CD8-positive, alpha-beta T cell (primary cell): ENCODE measurements at regions of chr9 and their contacts with region 1.

Region 1: DNA sequence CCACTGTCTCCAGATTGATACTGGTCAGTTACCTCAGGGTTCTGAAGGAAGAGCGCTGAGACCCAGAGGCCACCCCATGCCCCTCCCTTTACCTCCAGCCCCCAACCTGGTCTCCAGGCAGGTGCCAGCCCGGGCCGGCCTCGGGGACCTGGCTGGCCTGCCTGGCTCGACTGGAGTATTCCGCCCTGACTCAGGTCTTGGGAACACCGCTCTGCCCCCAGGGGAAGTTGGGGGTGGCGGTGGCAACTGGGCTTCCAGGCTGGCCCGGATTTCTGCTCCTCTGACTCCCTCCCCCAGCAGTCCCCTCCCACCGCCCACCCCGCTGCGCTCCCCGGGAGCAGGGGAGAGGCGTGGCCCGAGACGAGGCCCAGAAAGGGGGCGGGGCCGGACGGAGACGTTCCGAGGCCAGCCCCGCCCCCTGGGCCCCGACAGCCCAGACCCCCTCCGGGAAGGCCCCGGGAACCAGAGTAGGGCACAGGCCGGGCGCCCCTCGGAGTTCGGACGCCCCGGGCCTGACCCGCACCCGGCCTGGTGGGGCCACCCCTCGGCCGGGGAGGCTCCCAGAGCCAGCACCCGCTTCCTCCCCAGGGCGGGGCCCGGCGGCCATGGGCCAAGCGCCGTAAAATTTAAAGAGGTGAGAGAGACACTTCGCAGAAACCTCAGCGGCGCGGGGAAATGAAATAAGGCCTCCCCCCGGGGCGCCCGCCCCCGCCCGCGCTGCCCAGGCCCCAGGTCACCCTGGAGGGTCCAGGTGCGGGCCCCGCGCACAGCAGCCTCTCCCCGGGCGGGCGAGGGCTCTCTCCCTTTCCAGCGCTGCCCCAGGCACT is 82.4 kb upstream of the ZBTB43 start:
- DNase-seq: peak; percentile 66 to 94 (median 90)
- ATAC-seq: peak; percentile 66
- H3K4me3 ChIP-seq: peak overlapping the region; percentile 65 to 92
- H3K4me3 Mint-ChIP-seq: peak overlapping the region; percentile 90
- H3K27ac ChIP-seq: peak overlapping the region; percentile 87 to 99
- H3K27ac Mint-ChIP-seq: peak overlapping the region; percentile 95
- H3K4me1 ChIP-seq: peaks cover 44% of the 10 kb centered on the region
- H3K4me1 Mint-ChIP-seq: peaks cover 53% of the 10 kb centered on the region
- H3K27me3 ChIP-seq: no peaks in the 10 kb centered on the region
- H3K27me3 Mint-ChIP-seq: no peaks in the 10 kb centered on the region
- CTCF ChIP-seq: no peak

Region 2: DNA sequence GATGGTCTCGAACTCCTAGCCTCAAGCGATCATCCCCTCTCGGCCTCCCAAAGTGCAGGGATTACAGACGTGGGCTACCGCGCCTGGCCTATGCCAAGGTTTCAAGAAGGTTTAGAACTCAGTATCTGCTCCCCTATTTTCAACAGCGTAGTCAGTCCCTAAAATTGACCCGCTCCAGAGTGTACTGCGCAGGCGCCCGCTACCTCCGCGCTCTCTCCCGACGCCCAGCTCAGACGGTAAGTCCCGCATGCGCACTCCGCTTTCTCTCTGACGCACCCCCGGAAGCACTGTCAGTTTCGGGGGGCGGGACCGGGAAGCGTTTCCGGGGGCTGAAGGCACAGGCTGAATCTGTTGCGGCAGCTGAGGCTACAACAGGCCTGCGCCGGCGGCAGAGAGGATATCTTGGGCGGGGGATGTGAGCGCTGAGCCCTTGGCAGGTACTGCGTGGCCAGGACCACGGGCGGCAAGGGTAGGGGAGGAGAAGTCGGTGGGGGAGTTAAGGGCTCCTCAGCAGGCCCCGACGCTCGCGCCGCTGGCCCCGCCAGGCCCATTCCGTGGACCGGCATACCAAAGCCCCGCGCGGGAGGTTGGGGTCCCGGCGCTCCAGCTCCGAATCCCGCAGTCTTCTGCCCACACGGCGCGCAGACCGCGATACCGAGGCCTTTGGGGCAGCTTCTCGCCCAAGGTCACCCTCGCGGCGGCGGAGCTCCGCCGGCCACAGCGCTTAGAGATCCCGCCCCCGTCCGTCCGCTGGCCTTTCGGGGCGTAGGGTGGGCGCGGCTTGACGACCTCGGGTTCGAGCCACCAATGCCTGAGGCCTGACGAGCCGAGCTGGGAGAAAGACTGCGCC is 82.5 kb after region 1 on chr9 and contains the start of gene ZBTB43:
- CTCF ChIA-PET with region 1: no interaction called
- POLR2A ChIA-PET with region 1: interaction called, 7 read pairs
- intact Hi-C with region 1: loop called in 1 of 2 experiments (anchors 1 kb)
- DNase-seq: peak; percentile 97 to 99 (median 99)
- ATAC-seq: peak; percentile 82
- H3K4me3 ChIP-seq: peak within 1 kb of the TSS; percentile 83 to 85
- H3K4me3 Mint-ChIP-seq: peak within 1 kb of the TSS; percentile 98
- H3K27ac ChIP-seq: peak within 1 kb of the TSS; percentile 87 to 93
- H3K27ac Mint-ChIP-seq: peak within 1 kb of the TSS; percentile 99
- H3K4me1 ChIP-seq: peaks cover 32% of the 10 kb centered on the region
- H3K4me1 Mint-ChIP-seq: peaks cover 43% of the 10 kb centered on the region
- H3K27me3 ChIP-seq: no peaks in the 10 kb centered on the region
- H3K27me3 Mint-ChIP-seq: no peaks in the 10 kb centered on the region
- CTCF ChIP-seq: no peak
- total RNA-seq, gene ZBTB43: 55.7 to 65.0 TPM

Region 3: DNA sequence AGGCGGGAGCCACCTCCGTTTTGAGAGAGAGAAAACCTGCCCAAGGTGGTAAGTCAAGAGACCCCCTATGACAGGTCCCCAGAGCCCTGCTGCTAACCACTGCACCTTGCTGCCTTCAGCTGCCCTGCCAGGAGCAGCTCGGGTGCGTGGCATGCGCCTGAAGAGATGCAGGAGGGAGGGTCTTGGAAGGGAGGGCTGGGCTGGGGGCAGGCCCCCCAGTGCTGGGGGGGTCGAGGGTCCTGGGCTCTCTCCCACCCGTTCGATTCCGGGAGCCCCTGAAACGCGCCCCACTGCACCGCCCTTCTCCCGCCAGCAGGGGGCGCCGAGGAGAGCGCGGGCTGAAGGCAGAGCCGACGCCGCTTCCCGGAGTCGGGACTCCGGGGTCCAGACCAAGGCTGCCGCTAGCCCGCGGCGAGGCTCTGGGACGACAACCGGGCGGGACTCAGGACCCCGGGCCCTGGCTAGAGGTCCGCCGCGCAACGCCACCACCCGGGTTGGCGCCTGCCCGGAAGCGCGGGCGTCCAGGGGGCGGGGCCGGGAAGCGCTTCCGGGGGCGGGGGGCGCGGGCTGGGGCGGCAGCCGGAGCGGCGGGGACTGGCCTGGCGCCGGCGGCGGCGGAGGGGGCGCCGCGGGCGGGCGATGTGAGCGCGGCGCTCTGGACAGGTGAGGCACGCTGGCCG is 137.8 kb after region 1 on chr9 and contains the start of gene ZBTB34:
- CTCF ChIA-PET with region 1: no interaction called
- POLR2A ChIA-PET with region 1: no interaction called
- intact Hi-C with region 1: loop called in 1 of 2 experiments (anchors 5 kb)
- DNase-seq: peak; percentile 59 to 90 (median 76)
- ATAC-seq: peak; percentile 84
- H3K4me3 ChIP-seq: peak within 1 kb of the TSS; percentile 71 to 74
- H3K4me3 Mint-ChIP-seq: peak within 1 kb of the TSS; percentile 86
- H3K27ac ChIP-seq: peak within 1 kb of the TSS; percentile 57 to 76
- H3K27ac Mint-ChIP-seq: peak within 1 kb of the TSS; percentile 91
- H3K4me1 ChIP-seq: peaks cover 30% of the 10 kb centered on the region
- H3K4me1 Mint-ChIP-seq: peaks cover 30% of the 10 kb centered on the region
- H3K27me3 ChIP-seq: no peaks in the 10 kb centered on the region
- H3K27me3 Mint-ChIP-seq: peaks cover 2% of the 10 kb centered on the region
- CTCF ChIP-seq: peak; percentile 99
- total RNA-seq, gene ZBTB34: 3.0 to 3.3 TPM

Region 4: GRCh38 chr9:126985870-126986498 is 263.5 kb after region 1 on chr9:
- CTCF ChIA-PET with region 1: no interaction called
- POLR2A ChIA-PET with region 1: no interaction called
- intact Hi-C with region 1: loop called in 1 of 2 experiments (anchors 5 kb)
- DNase-seq: peak; percentile 71 to 99 (median 84)
- ATAC-seq: peak; percentile 73
- H3K4me3 ChIP-seq: peak overlapping the region in 1 of 2 experiments; percentile 26
- H3K4me3 Mint-ChIP-seq: peak overlapping the region; percentile 68
- H3K27ac ChIP-seq: peak overlapping the region; percentile 23 to 27
- H3K27ac Mint-ChIP-seq: peak overlapping the region; percentile 85
- H3K4me1 ChIP-seq: peaks cover 51% of the 10 kb centered on the region
- H3K4me1 Mint-ChIP-seq: peaks cover 71% of the 10 kb centered on the region
- H3K27me3 ChIP-seq: peaks cover 3 to 17% of the 10 kb centered on the region in 2 experiments
- H3K27me3 Mint-ChIP-seq: peaks cover 65% of the 10 kb centered on the region
- CTCF ChIP-seq: no peak

Region 5: GRCh38 chr9:127224178-127224882 is 501.9 kb after region 1 on chr9:
- CTCF ChIA-PET with region 1: no interaction called
- POLR2A ChIA-PET with region 1: no interaction called
- intact Hi-C with region 1: loop called in 1 of 2 experiments (anchors 10 kb)
- DNase-seq: peak; percentile 75 to 91 (median 89)
- ATAC-seq: peak; percentile 82
- H3K4me3 ChIP-seq: peak overlapping the region; percentile 66 to 72
- H3K4me3 Mint-ChIP-seq: peak overlapping the region; percentile 82
- H3K27ac ChIP-seq: peak overlapping the region in 1 of 2 experiments; percentile 53
- H3K27ac Mint-ChIP-seq: peak overlapping the region; percentile 77
- H3K4me1 ChIP-seq: peaks cover 33% of the 10 kb centered on the region
- H3K4me1 Mint-ChIP-seq: peaks cover 42% of the 10 kb centered on the region
- H3K27me3 ChIP-seq: no peaks in the 10 kb centered on the region
- H3K27me3 Mint-ChIP-seq: peaks cover 2% of the 10 kb centered on the region
- CTCF ChIP-seq: no peak